Activated CD4-positive, alpha-beta T cell treated with anti-CD3 and anti-CD28 coated beads, Interleukin-2, amount 10 ng/mL, durations not matched to agents 24 days and 14 days (primary cell): ENCODE measurements at regions of chr15 and their contacts with region 1.

Region 1: DNA sequence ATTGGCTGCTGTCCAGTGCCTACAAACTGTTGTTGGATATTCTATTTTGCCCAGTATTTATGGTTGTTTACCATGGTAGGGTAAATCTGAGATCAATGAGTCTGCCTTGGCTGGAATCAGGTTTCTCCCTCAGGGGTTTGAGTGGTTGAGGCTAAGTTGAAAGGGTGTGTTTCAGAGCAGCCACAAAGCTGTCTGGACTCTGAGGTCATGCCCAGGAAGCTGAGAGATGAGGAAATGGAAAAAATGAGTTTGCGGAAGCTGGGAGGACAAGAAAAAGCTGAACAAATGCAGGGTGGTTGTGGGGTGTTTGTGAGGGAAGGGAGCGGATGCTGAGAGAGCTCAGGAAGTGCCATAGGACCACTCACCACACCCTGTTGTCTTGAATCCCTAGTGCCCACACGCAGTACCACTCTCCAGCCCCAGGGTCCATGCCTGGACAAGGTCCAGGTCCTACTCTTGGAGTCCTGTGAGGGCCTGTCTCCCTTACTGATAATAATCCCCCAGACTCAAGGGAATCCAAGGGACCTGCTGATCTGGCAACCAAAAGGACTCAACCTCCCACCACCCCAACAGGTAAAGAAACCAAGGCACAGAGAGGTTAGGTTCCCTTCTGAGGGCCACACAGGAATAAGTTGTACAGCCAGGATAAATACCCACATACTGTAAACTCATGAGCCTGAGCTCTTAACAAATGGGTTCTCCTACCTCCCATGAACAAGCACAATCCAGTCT is 81.6 kb downstream of the PPCDC start:
- DNase-seq: peak; percentile 87
- H3K4me3 Mint-ChIP-seq: peak overlapping the region; percentile 47
- H3K27ac Mint-ChIP-seq: peak overlapping the region; percentile 88
- H3K4me1 Mint-ChIP-seq: peaks cover 35% of the 10 kb centered on the region
- H3K27me3 Mint-ChIP-seq: peaks cover 7% of the 10 kb centered on the region

Region 2: GRCh38 chr15:75042730-75043508 is 62.1 kb before region 1 on chr15:
- intact Hi-C with region 1: loop called (anchors 1 kb)
- DNase-seq: peak; percentile 92
- H3K4me3 Mint-ChIP-seq: peak overlapping the region; percentile 52
- H3K27ac Mint-ChIP-seq: peak overlapping the region; percentile 81
- H3K4me1 Mint-ChIP-seq: peaks cover 64% of the 10 kb centered on the region
- H3K27me3 Mint-ChIP-seq: no peaks in the 10 kb centered on the region

Region 3: GRCh38 chr15:75171408-75171807 is 66.4 kb after region 1 on chr15:
- intact Hi-C with region 1: loop called (anchors 2 kb)
- DNase-seq: peak; percentile 79
- H3K4me3 Mint-ChIP-seq: peak overlapping the region; percentile 41
- H3K27ac Mint-ChIP-seq: peak overlapping the region; percentile 74
- H3K4me1 Mint-ChIP-seq: peaks cover 45% of the 10 kb centered on the region
- H3K27me3 Mint-ChIP-seq: peaks cover 3% of the 10 kb centered on the region

Region 4: GRCh38 chr15:75542386-75542797 is 437.4 kb after region 1 on chr15:
- intact Hi-C with region 1: no loop called
- DNase-seq: no peak
- H3K4me3 Mint-ChIP-seq: no peak overlapping the region
- H3K27ac Mint-ChIP-seq: no peak overlapping the region
- H3K4me1 Mint-ChIP-seq: peaks cover 15% of the 10 kb centered on the region
- H3K27me3 Mint-ChIP-seq: no peaks in the 10 kb centered on the region